Right cardiac atrium (tissue), 5 donors: ENCODE measurements at regions of chr15 and their contacts with region 1.

Region 1: GRCh38 chr15:72890043-72890442 is 106.5 kb upstream of the ADPGK start:
- DNase-seq: no peak
- ATAC-seq: peak in 1 of 2 donors; percentile 14
- H3K4me3 ChIP-seq: no peak overlapping the region
- H3K27ac ChIP-seq: no peak overlapping the region
- H3K4me1 ChIP-seq: no peaks in the 10 kb centered on the region
- H3K27me3 ChIP-seq: no peaks in the 10 kb centered on the region

Region 2: DNA sequence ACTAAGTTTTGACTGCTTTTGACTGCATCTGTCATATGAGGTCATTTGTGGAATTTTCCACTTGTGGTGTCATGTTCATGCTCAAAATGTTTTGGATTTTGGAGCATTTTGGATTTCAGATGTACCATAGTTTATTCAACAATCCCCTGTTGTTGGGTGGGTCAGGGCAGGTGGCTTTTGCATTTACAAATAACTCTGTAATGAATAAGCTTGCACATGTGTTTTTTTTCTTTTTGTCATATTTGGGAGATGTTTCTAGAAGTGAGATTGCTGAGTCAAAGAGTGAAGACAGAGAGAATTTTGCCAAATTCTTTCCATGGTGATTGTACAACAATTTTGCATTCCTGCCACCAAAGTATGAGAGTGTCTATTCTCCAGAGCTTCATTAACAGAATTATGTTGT is 44.1 kb before region 1 on chr15:
- intact Hi-C with region 1: loop called in 1 of 4 experiments (anchors 10 kb)
- DNase-seq: no peak
- ATAC-seq: no peak
- H3K4me3 ChIP-seq: no peak overlapping the region
- H3K27ac ChIP-seq: no peak overlapping the region
- H3K4me1 ChIP-seq: no peaks in the 10 kb centered on the region
- H3K27me3 ChIP-seq: no peaks in the 10 kb centered on the region